Left ventricle myocardium superior (tissue), 1 donor: ENCODE measurements at regions of chr20 and their contacts with region 1.

Region 1: DNA sequence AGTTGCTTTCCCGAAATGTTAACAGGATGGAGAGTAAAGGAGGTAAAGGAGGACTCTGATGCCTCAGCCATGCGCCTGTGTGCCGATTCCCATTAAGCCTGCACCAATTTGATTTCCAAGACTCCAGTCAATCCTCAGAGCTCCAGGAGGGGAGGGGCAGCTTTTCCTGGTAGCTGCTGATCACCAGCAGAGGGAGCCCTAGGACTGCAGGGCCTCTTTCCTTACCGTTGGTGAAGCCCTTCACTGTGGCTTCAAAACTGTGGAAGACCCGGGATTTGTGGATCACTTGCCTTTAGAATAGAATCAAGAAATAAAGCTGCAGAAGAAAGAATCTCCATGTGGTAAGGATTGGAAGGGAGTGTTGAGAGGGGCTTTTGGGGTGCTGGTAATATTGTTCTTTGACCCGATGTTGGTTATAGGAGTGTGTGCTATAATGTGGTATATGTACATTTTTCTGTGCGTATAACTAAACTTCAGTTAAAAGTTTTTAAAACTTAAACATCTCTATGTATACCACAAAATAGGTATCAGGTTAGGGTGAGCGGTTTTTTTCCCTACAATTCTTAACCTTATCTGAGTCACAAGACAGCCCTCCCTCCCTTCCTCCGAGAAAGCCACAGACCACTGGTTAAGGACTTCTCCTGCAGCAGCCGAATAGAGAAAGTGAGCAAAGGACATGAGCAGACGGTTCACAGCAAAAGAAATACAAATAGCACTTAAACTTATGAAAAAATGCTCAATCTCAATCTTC is 6.9 kb upstream of the OSER1 start:
- DNase-seq: peak; percentile 72
- ATAC-seq: peak; percentile 82

Region 2: DNA sequence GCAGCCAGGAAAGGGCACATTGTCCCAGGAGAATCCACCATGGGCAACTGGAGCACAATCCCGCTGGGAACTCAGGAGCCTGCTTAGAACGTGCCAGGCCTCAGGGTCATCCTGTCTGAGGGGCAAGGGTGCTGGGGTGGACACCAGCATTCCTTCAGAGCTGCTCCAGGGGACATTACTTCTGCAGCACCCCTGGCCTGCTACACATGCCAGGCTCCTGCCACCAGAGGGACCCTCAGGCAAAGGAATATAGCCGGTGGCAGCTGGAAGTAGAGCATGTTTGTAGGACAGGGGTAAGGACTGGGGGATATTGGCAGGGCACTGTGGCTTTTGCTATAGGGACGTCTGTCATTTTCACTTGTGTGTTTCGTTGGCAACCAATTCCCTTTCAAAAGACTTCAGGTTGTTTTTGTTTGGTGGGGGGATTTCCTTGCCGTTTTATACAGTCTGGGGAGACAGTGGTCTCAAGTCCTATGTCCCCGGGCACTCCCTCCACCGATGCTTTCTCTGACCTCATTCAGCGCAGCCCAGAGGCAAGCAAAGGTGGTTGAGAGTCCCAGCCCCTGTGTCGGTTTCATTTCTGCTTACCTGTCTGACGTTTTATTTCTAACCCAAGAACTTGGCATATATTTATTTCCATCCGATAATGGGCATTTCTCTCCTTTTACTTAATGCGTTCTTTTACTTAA is 161.4 kb before region 1 on chr20:
- intact Hi-C with region 1: no loop called
- DNase-seq: peak; percentile 70
- ATAC-seq: peak; percentile 91

Region 3: DNA sequence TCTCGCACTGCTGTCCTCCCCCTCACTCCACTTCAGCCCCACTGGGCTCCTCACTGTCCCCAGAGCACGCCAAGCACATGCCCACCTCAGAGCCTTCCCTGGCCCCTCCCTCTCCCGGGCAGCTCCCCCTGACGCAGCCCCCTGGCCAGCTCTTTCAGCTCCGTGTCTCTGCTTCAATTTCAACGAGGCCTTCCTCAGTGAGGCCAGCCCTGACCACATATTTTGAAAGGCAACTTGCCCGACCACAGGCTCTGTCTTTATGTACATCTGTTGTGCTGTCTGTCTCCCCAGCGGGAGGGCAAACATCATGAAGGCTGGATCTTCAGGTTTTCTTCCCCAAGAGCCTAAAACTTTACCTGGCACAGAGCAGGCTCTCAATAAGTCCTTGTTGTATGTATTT is 75.1 kb before region 1 on chr20:
- intact Hi-C with region 1: no loop called
- DNase-seq: no peak
- ATAC-seq: peak; percentile 0

Region 4: GRCh38 chr20:44310664-44311639 is 93.4 kb after region 1 on chr20 and contains the start of gene FITM2:
- intact Hi-C with region 1: loop called (anchors 2 kb)
- DNase-seq: peak; percentile 100
- ATAC-seq: peak; percentile 85
- total RNA-seq, gene FITM2: 175 TPM

Region 5: DNA sequence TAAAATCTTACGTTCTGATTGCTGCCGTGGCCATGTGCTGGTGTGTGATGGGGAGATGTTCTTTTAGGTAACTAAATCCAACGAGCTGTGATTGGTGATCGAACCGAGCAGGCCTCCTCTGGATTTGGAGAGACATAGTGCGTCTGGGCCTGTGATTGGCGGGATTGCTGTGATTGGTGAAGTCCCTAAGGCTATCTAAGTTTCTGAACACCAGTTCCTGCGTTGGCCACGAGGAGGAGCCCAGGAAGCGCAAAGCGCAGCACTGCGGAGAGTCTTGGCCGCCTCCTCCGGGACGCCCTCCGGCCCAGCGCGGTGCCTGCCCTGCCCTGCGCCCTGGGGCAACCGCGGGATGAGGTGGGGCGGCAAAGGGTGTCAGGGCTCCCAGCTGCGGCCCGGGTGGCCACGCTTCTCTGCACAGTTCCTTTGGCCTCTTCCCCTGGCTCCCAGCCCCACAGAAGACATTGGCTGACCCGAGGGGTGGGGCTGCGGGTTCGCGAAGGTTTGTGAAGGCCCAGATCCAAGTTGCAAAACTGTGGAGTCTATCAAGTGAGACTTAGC is 171.0 kb after region 1 on chr20:
- intact Hi-C with region 1: loop called (anchors 2 kb)
- DNase-seq: peak; percentile 76
- ATAC-seq: peak; percentile 76